Testis (tissue), 5 donors: ENCODE measurements at regions of chr7 and their contacts with region 1.

Region 1: GRCh38 chr7:54215424-54215823 is 326.8 kb upstream of the VSTM2A start:
- DNase-seq: no peak
- H3K4me3 ChIP-seq: no peak overlapping the region
- H3K27ac ChIP-seq: no peak overlapping the region
- H3K4me1 ChIP-seq: no peaks in the 10 kb centered on the region
- H3K27me3 ChIP-seq: no peaks in the 10 kb centered on the region
- CTCF ChIP-seq: no peak
- POLR2A ChIP-seq: no peak

Region 2: GRCh38 chr7:54299426-54299825 is 84.0 kb after region 1 on chr7:
- intact Hi-C with region 1: loop called (anchors 10 kb)
- DNase-seq: no peak
- H3K4me3 ChIP-seq: no peak overlapping the region
- H3K27ac ChIP-seq: no peak overlapping the region
- H3K4me1 ChIP-seq: no peaks in the 10 kb centered on the region
- H3K27me3 ChIP-seq: no peaks in the 10 kb centered on the region
- CTCF ChIP-seq: no peak
- POLR2A ChIP-seq: no peak